HEK293T (cell line): ENCODE measurements at regions of chr13 and their contacts with region 1.

Region 1: DNA sequence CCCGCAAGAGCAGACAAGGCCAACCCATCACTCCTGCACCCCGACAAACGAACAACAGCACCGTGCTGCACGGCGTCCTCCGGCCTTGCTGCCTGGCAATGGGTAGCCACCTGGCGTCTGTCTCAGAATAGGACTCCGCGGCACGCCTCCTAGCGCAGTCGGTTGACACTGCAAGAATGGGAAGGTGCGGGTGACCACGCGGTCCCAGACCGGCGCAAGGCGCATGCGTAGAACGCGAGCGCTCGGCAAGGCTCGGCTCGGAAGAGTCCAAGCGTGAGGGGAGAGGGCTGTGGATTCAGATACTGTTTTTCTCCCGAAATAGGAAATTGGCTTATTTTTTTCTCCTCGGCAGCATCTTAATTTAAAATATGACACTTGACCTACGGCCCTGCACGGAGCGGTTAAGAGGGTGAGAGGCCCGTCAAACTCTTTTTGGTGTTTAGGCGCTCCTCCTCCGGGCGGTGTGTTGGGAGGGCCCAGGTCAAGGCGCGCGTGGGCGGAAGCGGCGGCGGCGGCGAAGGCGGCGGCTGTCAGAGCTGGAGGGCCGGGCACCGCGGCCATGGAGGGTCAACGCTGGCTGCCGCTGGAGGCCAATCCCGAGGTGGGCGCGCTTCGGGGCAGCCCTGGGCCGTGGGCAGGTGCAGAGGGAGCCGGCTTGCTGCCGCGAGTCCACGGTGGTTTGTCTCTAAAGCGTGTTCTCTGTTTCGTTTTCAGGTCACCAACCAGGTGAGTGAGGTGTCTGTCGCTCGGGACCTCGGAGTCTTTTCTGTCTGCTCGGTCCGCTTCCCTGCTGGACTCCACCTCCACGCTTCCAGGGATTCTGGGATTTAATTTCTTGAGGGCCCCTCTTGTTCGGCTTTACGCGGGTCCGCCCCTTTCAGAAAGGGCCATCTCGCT is at the start of gene UCHL3:
- DNase-seq: peak; percentile 100

Region 2: DNA sequence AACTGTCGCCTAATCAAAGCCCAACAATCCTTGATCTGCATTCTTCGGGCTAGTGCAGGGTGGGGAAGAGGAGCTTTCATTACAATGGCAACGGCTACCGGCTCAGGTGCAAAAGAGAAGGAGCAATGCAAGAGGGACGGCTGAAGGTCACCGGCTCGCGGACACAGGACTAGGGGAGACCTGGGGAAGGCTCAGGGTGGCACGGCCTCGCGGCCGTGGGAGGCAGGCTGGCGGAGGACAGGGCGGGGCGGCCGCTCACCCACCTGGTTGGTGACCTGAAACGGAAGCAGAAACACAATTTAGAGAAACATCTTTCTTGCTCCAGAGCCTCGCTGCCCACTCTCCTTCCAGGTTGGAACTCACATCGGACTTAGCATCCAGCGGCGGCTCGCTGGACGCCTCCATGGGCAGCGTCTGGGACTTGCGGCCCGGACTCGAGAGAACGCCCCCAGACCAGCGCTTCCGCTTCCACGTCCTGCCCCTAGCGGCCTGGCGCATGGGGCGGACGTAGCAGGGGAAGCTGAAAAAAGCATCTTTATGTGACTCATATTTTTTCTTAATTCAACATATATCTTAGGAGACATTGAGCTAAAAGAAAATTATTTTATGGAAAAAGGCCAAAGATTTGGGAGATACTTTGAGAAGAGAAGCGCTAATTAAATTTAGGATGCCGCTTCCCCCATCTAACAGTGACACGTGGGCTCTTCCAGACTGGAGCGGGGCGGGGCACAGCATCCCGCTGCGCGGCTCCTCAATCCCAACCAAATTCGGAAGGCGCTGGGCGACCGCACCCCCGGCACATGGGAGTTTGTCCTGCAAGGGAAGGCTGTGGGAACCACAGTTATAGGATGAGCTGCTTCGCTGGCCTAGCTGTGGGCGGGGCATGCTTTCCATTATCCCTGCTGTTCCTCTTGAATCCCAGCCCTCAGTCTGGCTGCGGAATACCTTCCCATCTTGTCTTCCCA is 11.8 kb before region 1 on chr13 and contains the start of gene COMMD6:
- CTCF ChIA-PET with region 1: interaction called, 4 read pairs
- POLR2A ChIA-PET with region 1: interaction called, 11 read pairs
- DNase-seq: peak; percentile 97

Region 3: DNA sequence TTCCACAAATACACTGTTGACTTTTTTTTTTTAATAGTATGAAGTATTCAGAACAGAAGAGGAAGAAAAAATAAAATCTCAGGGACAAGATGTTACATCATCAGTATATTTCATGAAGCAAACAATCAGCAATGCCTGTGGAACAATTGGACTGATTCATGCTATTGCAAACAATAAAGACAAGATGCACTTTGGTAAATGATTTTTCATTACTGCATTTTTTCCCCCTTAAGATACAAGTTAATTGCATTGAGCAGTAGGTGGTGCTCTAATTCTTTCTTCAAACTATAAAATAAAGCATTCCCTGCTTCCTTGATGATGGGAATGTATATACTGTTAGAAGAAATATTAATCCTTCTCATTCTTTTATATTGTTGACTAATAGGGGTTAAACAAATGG is 17.1 kb after region 1 on chr13:
- CTCF ChIA-PET with region 1: no interaction called
- POLR2A ChIA-PET with region 1: no interaction called
- DNase-seq: no peak

Region 4: GRCh38 chr13:75838366-75839005 is 289.0 kb after region 1 on chr13:
- CTCF ChIA-PET with region 1: no interaction called
- POLR2A ChIA-PET with region 1: no interaction called
- DNase-seq: no peak

Region 5: GRCh38 chr13:76331943-76332712 is 782.6 kb after region 1 on chr13:
- CTCF ChIA-PET with region 1: interaction called, 11 read pairs
- POLR2A ChIA-PET with region 1: no interaction called
- DNase-seq: no peak